ENCODE measurements at regions of chr11 and their contacts with region 1.

Region 1: GRCh38 chr11:47185305-47186075 is 744 bp downstream of the PACSIN3 start:
- DNase-seq: peak in 20 of 42 donors; percentile 21 to 79 (median 50)

Region 2: GRCh38 chr11:47213985-47214564 is 28.6 kb after region 1 on chr11:
- intact Hi-C with region 1: loop called (anchors 2 kb)
- DNase-seq: peak; percentile 91 to 99 (median 97)

Region 3: DNA sequence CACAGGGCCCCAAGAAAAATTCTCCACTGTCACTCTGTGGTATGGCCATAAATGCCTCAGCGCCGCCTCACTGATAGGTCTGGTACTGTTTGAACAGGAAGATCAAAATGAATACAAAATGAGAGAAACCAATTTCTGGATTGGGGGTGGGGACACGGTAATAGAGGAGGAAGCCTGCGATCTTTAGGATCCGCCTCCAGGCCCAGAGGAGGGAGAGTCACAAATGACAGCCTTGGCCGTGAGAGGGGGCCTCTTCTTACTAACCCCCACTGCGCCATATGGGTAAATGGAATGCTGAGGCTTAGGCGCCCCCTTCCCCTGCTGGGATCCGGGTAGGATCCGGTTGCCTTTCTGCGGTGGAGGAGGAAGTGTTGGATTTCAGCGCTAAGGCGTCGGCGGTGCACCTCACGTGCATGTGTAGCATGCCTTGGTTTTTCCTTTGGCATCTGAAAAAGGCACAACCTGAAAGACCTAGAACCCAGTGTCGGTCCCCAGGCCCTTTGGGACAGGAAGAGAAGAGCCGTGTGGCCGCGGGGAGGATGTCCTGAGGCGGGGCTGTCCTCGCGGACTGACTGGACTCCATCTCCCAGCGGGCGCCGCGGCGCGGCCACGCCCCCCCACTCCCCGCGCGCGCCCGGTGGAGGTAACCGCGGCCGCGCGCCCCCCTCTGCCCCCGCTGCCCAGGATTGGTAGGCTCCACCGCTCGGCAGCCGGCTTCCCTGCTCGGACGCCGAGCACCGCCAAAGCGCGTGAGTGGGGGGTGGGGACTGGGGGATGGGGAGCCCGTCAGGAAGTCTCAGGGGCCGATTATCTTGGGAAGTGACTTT is 83.7 kb after region 1 on chr11:
- intact Hi-C with region 1: no loop called
- DNase-seq: peak; percentile 73 to 95 (median 88)

Measured in head of caudate nucleus (tissue), 42 donors.